ENCODE measurements at regions of chr6 and their contacts with region 1.

Region 1: DNA sequence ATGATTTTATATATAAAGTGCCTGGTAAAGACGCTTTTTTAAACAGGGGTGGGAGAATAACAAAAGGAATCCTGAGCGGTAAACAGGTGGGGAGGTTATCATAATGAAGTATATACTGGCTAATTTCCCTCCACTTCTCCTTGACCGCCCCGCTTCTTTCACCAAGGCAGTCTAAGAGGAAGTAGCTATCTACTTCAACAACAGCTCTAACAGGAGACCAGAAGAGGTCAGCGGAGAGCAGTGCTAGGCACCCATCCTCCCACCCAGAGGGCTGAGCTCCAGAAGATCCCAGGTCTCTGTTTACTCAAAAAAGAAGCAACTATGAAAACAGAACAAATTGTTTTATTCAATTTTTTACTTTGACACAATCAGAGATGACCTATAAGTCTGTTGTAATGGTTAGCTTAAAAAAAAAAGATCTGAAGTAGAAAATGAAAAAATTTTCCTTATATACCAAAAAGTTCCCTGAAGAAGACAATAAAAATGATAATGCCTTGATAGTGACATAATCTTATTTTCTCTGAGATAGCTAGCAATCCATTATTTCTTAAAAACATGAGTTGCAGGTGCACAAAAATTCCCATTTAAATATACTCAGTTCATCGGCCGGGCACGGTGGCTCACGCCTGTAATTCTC is 141.1 kb downstream of the PDSS2 start:
- DNase-seq: peak; percentile 61
- ATAC-seq: peak; percentile 100
- H3K4me3 Mint-ChIP-seq: no peak overlapping the region
- H3K27ac Mint-ChIP-seq: no peak overlapping the region
- H3K4me1 Mint-ChIP-seq: peaks cover 5% of the 10 kb centered on the region
- H3K27me3 Mint-ChIP-seq: no peaks in the 10 kb centered on the region
- CTCF ChIP-seq: no peak

Region 2: GRCh38 chr6:107185391-107185970 is 132.7 kb before region 1 on chr6:
- CTCF ChIA-PET with region 1: interaction called, 21 read pairs
- POLR2A ChIA-PET with region 1: no interaction called
- DNase-seq: no peak
- ATAC-seq: peak; percentile 100
- H3K4me3 Mint-ChIP-seq: no peak overlapping the region
- H3K27ac Mint-ChIP-seq: no peak overlapping the region
- H3K4me1 Mint-ChIP-seq: 0 out of 2 replicates have a peak, but pooled peaks cover 3% of the 10 kb centered on the region
- H3K27me3 Mint-ChIP-seq: no peaks in the 10 kb centered on the region
- CTCF ChIP-seq: no peak

Region 3: GRCh38 chr6:107331409-107332386 is 13.5 kb after region 1 on chr6:
- CTCF ChIA-PET with region 1: interaction called, 11 read pairs
- POLR2A ChIA-PET with region 1: interaction called, 7 read pairs
- DNase-seq: no peak
- ATAC-seq: no peak
- H3K4me3 Mint-ChIP-seq: no peak overlapping the region
- H3K27ac Mint-ChIP-seq: no peak overlapping the region
- H3K4me1 Mint-ChIP-seq: 0 out of 2 replicates have a peak, but pooled peaks cover 4% of the 10 kb centered on the region
- H3K27me3 Mint-ChIP-seq: no peaks in the 10 kb centered on the region
- CTCF ChIP-seq: no peak

Region 4: GRCh38 chr6:107459283-107460082 is 141.3 kb after region 1 on chr6 and contains the start of gene PDSS2:
- CTCF ChIA-PET with region 1: interaction called, 24 read pairs
- POLR2A ChIA-PET with region 1: interaction called, 4 read pairs
- DNase-seq: peak; percentile 99
- ATAC-seq: peak; percentile 96
- H3K4me3 Mint-ChIP-seq: peak within 1 kb of the TSS; percentile 81
- H3K27ac Mint-ChIP-seq: peak within 1 kb of the TSS; percentile 88
- H3K4me1 Mint-ChIP-seq: peaks cover 7% of the 10 kb centered on the region
- H3K27me3 Mint-ChIP-seq: no peaks in the 10 kb centered on the region
- CTCF ChIP-seq: no peak
- total RNA-seq, gene PDSS2: 15.8 to 18.3 TPM (median 17.2 TPM) in 3 replicates

Region 5: DNA sequence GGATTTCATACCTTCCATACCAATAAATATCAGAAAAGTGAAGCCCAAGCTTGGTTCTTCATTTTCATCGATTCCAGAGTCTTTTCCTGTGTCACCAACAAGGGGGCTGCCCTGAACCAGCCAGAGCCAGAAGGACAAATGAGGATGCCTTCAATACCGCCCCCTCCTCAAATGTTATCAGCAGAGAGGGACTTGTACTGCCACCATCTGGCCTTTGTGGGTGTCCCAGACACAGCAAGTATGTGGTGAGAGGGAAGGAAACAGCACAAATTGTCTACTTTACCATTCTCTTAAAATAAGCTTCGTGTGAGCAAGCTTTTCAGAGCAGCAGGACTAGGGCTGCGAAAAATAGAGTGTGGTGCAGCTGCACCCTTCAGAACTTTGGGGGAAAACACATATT is 337.0 kb after region 1 on chr6:
- CTCF ChIA-PET with region 1: interaction called, 30 read pairs
- POLR2A ChIA-PET with region 1: no interaction called
- DNase-seq: peak; percentile 54
- ATAC-seq: peak; percentile 90
- H3K4me3 Mint-ChIP-seq: no peak overlapping the region
- H3K27ac Mint-ChIP-seq: 0 out of 2 replicates have a peak overlapping the region, but pooled peaks have one; percentile 73
- H3K4me1 Mint-ChIP-seq: peaks cover 54% of the 10 kb centered on the region
- H3K27me3 Mint-ChIP-seq: no peaks in the 10 kb centered on the region
- CTCF ChIP-seq: no peak; the same call in 1 of the 2 replicates

Measured in WTC11 (cell line).